ENCODE measurements at regions of chr10 and their contacts with region 1.

Region 1: GRCh38 chr10:74753442-74754211 is 72.8 kb upstream of the KAT6B start:
- DNase-seq: no peak
- ATAC-seq: no peak
- H3K4me3 ChIP-seq: no peak overlapping the region
- H3K27ac ChIP-seq: no peak overlapping the region
- H3K4me1 ChIP-seq: peaks cover 0 to 10% (median 0%) of the 10 kb centered on the region in 9 donors
- H3K27me3 ChIP-seq: no peaks in the 10 kb centered on the region
- CTCF ChIP-seq: no peak

Region 2: GRCh38 chr10:74575191-74575720 is 178.4 kb before region 1 on chr10:
- intact Hi-C with region 1: no loop called
- DNase-seq: no peak
- ATAC-seq: no peak
- H3K4me3 ChIP-seq: no peak overlapping the region
- H3K27ac ChIP-seq: no peak overlapping the region
- H3K4me1 ChIP-seq: no peaks in the 10 kb centered on the region
- H3K27me3 ChIP-seq: no peaks in the 10 kb centered on the region
- CTCF ChIP-seq: no peak

Region 3: GRCh38 chr10:74662635-74663034 is 91.0 kb before region 1 on chr10:
- intact Hi-C with region 1: no loop called
- DNase-seq: no peak
- ATAC-seq: no peak
- H3K4me3 ChIP-seq: no peak overlapping the region
- H3K27ac ChIP-seq: no peak overlapping the region
- H3K4me1 ChIP-seq: no peaks in the 10 kb centered on the region
- H3K27me3 ChIP-seq: no peaks in the 10 kb centered on the region
- CTCF ChIP-seq: no peak

Region 4: GRCh38 chr10:74888962-74889663 is 135.5 kb after region 1 on chr10:
- intact Hi-C with region 1: loop called in 1 of 10 experiments (anchors 10 kb)
- DNase-seq: no peak
- ATAC-seq: peak in 2 of 8 donors; percentile 30 to 56
- H3K4me3 ChIP-seq: no peak overlapping the region
- H3K27ac ChIP-seq: peak overlapping the region in 2 of 10 donors; percentile 56 to 70
- H3K4me1 ChIP-seq: peaks cover 0 to 51% (median 19%) of the 10 kb centered on the region in 9 donors
- H3K27me3 ChIP-seq: no peaks in the 10 kb centered on the region
- CTCF ChIP-seq: peak in 3 of 9 donors; percentile 20 to 36 (median 31)